Right ventricle myocardium inferior (tissue), 1 donor: ENCODE measurements at regions of chr2 and their contacts with region 1.

Region 1: DNA sequence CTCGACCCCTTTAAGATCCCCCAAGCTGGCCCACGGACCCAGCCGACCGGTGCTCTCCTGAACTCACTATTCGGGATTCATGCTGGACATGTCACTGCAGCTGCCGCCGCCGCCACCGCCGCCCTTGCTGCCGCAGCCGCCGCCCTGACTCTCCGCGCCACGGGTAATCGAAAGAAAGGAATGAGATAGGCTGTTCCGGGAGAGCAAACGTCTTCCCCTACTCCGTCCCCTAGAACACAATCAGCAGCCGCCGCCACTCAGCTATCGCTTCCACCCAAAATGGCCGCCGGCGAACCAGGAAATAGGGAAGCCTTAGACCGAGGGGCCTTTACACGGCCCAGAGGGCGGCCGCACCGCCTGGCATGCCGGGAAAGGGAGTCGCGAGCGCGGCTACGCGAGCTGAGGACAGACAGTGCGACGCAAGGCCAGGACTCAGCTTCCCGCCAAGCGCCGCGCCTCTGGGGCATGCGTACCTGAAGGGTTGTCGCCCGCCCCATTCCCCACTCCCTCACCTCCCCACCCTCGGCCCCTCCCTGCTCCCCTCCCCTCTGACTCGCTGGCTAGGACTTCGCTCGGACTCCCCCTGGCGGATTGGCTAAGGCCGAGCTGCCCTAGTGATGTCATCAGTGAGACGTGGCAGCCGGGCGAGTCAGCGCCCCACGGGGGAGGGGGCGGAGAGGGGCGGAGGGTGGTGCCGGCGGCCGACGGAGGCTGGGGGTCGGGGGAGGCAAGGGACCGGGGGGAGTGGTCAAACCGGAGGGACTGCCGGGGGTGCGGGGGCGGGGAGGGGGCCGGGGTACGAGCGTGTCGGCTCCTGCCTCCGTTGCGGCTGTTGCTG is at the start of gene RAB1A:
- DNase-seq: peak; percentile 100
- ATAC-seq: peak; percentile 98
- total RNA-seq, gene RAB1A: 119 TPM

Region 2: DNA sequence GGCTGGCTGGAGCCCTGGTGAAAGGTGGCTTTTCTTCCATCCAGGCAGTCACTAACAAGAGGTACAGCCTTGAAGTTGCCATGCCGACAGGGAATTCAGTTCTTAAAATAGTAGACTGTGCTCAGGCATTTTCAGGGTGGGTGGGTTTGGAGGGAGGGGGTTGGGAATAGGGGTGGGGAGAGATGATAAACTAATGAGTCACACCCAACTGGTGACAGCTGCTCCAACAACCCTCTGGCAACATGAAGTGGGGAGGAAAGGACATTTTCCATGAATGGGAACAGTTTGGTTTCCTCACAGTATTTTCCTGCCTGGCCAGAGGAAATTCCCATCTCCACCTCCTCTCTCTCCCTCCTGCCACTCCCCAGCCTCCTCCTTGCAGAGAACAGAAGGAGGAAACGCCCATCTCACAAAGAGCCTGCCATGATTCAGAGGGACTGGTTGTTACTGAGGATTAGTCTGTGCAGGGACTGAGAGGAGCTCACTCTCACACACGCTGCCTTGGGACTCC is 253.9 kb before region 1 on chr2:
- intact Hi-C with region 1: no loop called
- DNase-seq: no peak
- ATAC-seq: peak; percentile 72

Region 3: DNA sequence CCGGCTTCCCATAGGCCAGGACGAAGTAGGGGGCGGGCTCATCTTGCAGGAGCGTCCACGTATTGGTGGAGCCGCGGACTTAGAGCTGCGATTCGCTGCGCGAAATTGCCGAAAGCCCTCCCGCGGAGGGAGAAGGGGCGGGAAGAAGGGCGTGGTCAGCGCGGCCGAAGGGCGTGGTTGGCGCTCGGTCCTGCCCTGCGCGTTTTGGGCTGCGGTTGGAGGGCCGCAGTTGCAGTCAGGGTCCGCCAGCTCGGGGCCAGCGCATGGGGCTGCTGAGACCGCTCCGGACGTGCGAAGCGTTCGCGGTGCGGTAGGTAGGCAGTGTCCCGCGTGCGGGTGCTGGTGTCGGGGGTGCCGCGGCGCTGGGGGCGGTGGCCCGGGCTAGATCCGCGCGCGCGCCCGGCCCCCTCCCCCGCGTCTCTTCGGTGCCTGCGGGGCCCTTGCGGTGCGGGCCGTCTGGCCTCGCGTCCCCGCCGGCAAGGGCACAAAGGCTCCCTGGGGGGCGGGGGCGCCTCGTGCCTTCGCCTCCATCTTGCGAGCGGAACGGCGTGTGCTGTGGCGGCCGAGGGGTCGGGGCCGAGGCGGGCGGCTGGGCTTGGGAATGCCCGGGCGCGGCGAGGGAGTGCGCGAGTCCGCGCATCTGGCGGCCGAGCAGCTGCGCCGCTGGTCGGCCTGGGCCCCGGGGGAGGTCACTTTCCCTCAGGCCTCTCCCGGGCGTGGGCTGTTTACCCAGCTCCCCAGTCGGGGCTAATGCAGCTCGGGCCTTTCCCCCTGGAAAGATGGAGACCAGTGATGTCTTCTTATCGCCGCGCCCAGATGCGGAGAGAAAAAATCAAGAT is 73.6 kb before region 1 on chr2 and contains the start of gene CEP68:
- intact Hi-C with region 1: loop called (anchors 2 kb)
- DNase-seq: peak; percentile 98
- ATAC-seq: peak; percentile 97
- total RNA-seq, gene CEP68: 19.7 TPM

Region 4: GRCh38 chr2:65070172-65070830 is 59.7 kb before region 1 on chr2:
- intact Hi-C with region 1: loop called (anchors 5 kb)
- DNase-seq: no peak
- ATAC-seq: peak; percentile 21

Region 5: DNA sequence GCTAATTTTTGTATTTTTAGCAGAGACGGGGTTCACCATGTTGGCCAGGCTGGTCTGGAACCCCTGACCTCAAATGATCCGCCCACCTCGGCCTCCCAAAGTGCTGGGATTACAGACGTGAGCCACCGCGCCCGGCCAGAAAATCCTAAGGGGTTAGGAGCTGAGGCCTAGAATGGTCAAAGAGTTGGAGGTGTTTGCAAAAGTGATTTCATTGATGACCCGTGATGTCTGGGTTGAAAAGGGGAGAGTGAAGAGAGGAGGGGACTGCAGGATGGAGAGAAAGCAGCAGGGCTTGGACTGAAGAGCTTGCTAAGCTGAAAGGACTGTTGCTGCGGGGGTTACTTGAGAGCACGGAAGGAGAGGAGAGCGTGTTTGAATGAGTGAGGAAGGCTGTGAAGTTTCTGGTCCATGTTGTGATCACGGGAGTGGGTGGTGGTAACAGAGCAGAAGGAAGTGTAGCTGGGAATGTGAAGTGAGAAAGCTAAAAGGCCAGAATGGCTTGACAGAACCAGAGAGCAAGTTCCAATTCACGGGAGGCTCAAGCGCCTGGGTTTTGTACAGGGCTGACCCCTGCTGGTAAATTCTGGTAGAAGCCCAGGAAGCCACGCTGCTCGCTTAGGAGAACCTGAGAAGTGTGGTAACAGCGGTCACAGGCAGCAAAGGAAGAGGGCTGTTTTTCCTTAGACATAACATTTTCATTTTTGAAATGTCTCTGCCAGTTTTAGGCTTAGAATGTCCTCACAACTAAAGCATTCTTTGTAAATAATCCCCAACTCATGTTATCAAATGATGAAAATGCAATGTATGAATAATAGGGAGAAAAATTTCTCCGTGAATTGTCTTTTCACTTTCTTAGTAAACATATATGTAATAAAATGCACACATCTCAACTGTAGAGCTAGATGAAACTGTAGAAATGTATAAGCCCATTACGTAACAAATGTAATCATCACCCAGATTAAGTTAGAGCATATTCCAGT is 57.1 kb after region 1 on chr2:
- intact Hi-C with region 1: no loop called
- DNase-seq: peak; percentile 86
- ATAC-seq: peak; percentile 92

Region 6: GRCh38 chr2:65227425-65228262 is 97.6 kb after region 1 on chr2 and contains the start of gene ACTR2:
- intact Hi-C with region 1: loop called (anchors 1 kb)
- DNase-seq: peak; percentile 99
- ATAC-seq: peak; percentile 99
- total RNA-seq, gene ACTR2: 108 TPM